Activated CD4-positive, alpha-beta T cell treated with anti-CD3 and anti-CD28 coated beads for 36 hours (primary cell): ENCODE measurements at regions of chr12 and their contacts with region 1.

Region 1: GRCh38 chr12:88122666-88123065 is 19.2 kb downstream of the CEP290 start:
- DNase-seq: no peak
- ATAC-seq: no peak
- H3K4me3 Mint-ChIP-seq: no peak overlapping the region
- H3K27ac Mint-ChIP-seq: no peak overlapping the region
- H3K4me1 Mint-ChIP-seq: no peaks in the 10 kb centered on the region
- H3K27me3 Mint-ChIP-seq: no peaks in the 10 kb centered on the region

Region 2: GRCh38 chr12:88580051-88580871 is 457.6 kb after region 1 on chr12 and contains the start of gene KITLG:
- CTCF ChIA-PET with region 1: no interaction called
- POLR2A ChIA-PET with region 1: no interaction called
- intact Hi-C with region 1: loop called in 1 of 2 experiments (anchors 10 kb)
- DNase-seq: peak; percentile 62
- ATAC-seq: peak; percentile 88
- H3K4me3 Mint-ChIP-seq: peak within 1 kb of the TSS; percentile 52
- H3K27ac Mint-ChIP-seq: no peak within 1 kb of the TSS
- H3K4me1 Mint-ChIP-seq: peaks cover 9% of the 10 kb centered on the region
- H3K27me3 Mint-ChIP-seq: peaks cover 43% of the 10 kb centered on the region
- total RNA-seq, gene KITLG: 0.14 to 0.23 TPM